Activated naive CD4-positive, alpha-beta T cell treated with anti-CD3 and anti-CD28 coated beads, Interleukin-2, amount 10 ng/mL, durations not matched to agents 7 days and 5 days (primary cell): ENCODE measurements at regions of chr12 and their contacts with region 1.

Region 1: GRCh38 chr12:95117178-95117599 is 43.8 kb upstream of the NR2C1 start:
- DNase-seq: peak; percentile 70
- H3K4me3 Mint-ChIP-seq: no peak overlapping the region
- H3K27ac Mint-ChIP-seq: no peak overlapping the region
- H3K4me1 Mint-ChIP-seq: peaks cover 8% of the 10 kb centered on the region
- H3K27me3 Mint-ChIP-seq: no peaks in the 10 kb centered on the region

Region 2: GRCh38 chr12:95336390-95337067 is 219.3 kb after region 1 on chr12:
- CTCF ChIA-PET with region 1: interaction called, 15 read pairs
- DNase-seq: no peak
- H3K4me3 Mint-ChIP-seq: no peak overlapping the region
- H3K27ac Mint-ChIP-seq: no peak overlapping the region
- H3K4me1 Mint-ChIP-seq: peaks cover 5% of the 10 kb centered on the region
- H3K27me3 Mint-ChIP-seq: no peaks in the 10 kb centered on the region

Region 3: GRCh38 chr12:95532851-95533250 is 415.7 kb after region 1 on chr12:
- CTCF ChIA-PET with region 1: interaction called, 54 read pairs
- DNase-seq: no peak
- H3K4me3 Mint-ChIP-seq: no peak overlapping the region
- H3K27ac Mint-ChIP-seq: no peak overlapping the region
- H3K4me1 Mint-ChIP-seq: peaks cover 4% of the 10 kb centered on the region
- H3K27me3 Mint-ChIP-seq: no peaks in the 10 kb centered on the region

Region 4: DNA sequence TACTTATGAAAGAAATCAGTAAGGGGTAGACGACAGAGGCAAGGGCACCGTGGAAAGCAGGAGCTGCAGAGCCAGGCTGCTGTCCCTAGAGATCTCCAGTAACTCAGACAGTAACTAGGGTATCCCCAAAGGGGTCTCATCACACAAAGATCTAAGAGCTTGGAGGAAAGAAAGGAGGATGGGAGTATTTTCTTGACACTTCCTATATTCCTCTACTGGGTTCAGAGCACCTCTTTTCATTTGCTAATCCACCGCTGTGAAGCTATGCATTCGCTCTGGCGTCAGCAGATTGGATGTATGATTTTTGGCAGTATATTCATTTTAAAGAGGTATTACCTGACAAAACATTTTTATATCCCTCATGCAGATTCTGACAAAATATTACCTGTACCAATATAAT is 421.5 kb after region 1 on chr12:
- CTCF ChIA-PET with region 1: interaction called, 54 read pairs
- DNase-seq: no peak
- H3K4me3 Mint-ChIP-seq: no peak overlapping the region
- H3K27ac Mint-ChIP-seq: no peak overlapping the region
- H3K4me1 Mint-ChIP-seq: no peaks in the 10 kb centered on the region
- H3K27me3 Mint-ChIP-seq: no peaks in the 10 kb centered on the region